ENCODE measurements at regions of chr5 and their contacts with region 1.

Region 1: GRCh38 chr5:175444060-175444904 is at the start of gene DRD1:
- DNase-seq: peak; percentile 56 to 88
- ATAC-seq: peak; percentile 78
- H3K4me3 ChIP-seq: peak within 1 kb of the TSS; percentile 1 to 16
- H3K27ac ChIP-seq: no peak within 1 kb of the TSS
- H3K4me1 ChIP-seq: no peaks in the 10 kb centered on the region
- H3K27me3 ChIP-seq: no peaks in the 10 kb centered on the region
- total RNA-seq, gene DRD1: 0.45 to 0.62 TPM

Region 2: GRCh38 chr5:175059687-175060211 is 384.5 kb before region 1 on chr5:
- intact Hi-C with region 1: loop called in 1 of 2 experiments (anchors 10 kb)
- DNase-seq: peak; percentile 76 to 89
- ATAC-seq: peak; percentile 63
- H3K4me3 ChIP-seq: peak overlapping the region; percentile 2 to 40
- H3K27ac ChIP-seq: no peak overlapping the region
- H3K4me1 ChIP-seq: no peaks in the 10 kb centered on the region
- H3K27me3 ChIP-seq: no peaks in the 10 kb centered on the region

Region 3: DNA sequence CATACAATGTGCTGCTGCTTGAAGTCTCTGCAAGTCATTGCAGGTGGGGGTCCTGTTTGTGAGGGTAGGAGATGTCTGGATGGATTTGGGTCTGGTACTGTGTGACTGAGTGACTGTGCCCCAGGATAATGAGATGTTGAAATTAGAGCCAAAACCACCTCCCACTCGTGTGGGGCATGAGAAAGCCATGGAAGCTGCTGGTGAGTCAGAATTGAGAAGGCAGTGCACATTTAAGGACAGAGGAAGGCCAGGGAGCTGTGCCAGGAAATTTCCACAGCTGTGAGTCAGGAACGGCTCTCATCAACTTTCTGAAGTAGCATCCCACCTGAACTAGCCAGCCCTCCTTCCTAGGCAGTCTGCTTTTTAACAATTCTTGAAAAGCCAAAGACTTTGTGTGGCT is 230.1 kb before region 1 on chr5:
- intact Hi-C with region 1: loop called in 1 of 2 experiments (anchors 10 kb)
- DNase-seq: peak; percentile 89 to 91
- ATAC-seq: no peak
- H3K4me3 ChIP-seq: no peak overlapping the region
- H3K27ac ChIP-seq: peak overlapping the region in 1 of 2 donors; percentile 29
- H3K4me1 ChIP-seq: peaks cover 5 to 9% of the 10 kb centered on the region in 2 donors
- H3K27me3 ChIP-seq: no peaks in the 10 kb centered on the region

Region 4: GRCh38 chr5:175378444-175379028 is 65.7 kb before region 1 on chr5:
- intact Hi-C with region 1: no loop called
- DNase-seq: no peak
- ATAC-seq: peak; percentile 26
- H3K4me3 ChIP-seq: no peak overlapping the region
- H3K27ac ChIP-seq: no peak overlapping the region
- H3K4me1 ChIP-seq: no peaks in the 10 kb centered on the region
- H3K27me3 ChIP-seq: peaks cover 0 to 2% of the 10 kb centered on the region in 2 donors

Region 5: GRCh38 chr5:175427762-175428161 is 16.5 kb before region 1 on chr5:
- intact Hi-C with region 1: no loop called
- DNase-seq: no peak
- ATAC-seq: no peak
- H3K4me3 ChIP-seq: no peak overlapping the region
- H3K27ac ChIP-seq: no peak overlapping the region
- H3K4me1 ChIP-seq: no peaks in the 10 kb centered on the region
- H3K27me3 ChIP-seq: no peaks in the 10 kb centered on the region

Measured in aorta (tissue), 5 donors.